PC-3 (cell line): ENCODE measurements at regions of chr11 and their contacts with region 1.

Region 1: DNA sequence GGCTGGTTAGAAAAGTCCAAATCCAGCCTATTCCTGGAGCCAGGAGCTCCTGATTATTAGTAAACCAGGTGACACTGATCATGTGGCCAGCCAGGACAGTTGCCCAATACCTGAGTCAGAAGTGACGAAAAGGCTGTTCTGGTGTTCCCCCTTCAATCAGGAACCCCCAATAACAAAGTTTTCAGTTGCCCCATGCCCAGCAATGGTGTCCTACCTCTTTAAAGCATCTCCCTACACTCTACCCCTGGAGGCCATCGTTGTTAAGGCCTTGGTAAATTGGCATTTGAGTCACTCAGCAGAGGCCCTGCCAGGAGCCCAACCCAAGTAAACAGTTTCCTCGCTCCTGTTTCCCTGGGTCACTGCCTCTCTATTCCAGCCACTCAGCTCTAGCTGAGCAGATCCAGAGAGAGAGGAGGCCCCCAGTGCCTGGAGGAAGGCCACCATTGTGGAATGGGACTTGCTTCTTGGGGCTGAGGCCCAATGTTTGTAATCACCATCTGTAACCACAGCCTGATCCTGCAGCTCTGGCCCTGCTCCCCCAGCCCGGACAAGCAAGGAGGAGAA is 25.0 kb downstream of the ARHGAP1 start:
- DNase-seq: peak; percentile 72
- ATAC-seq: peak; percentile 94
- H3K4me3 ChIP-seq: no peak overlapping the region
- H3K27ac ChIP-seq: peak overlapping the region; percentile 38
- H3K4me1 ChIP-seq: peaks cover 13% of the 10 kb centered on the region
- H3K27me3 ChIP-seq: no peaks in the 10 kb centered on the region
- CTCF ChIP-seq: no peak

Region 2: GRCh38 chr11:46346886-46347636 is 328.3 kb before region 1 on chr11 and contains the start of gene DGKZ:
- CTCF ChIA-PET with region 1: no interaction called
- POLR2A ChIA-PET with region 1: no interaction called
- intact Hi-C with region 1: no loop called
- DNase-seq: peak; percentile 87
- ATAC-seq: peak; percentile 82
- H3K4me3 ChIP-seq: peak within 1 kb of the TSS; percentile 81
- H3K27ac ChIP-seq: no peak within 1 kb of the TSS
- H3K4me1 ChIP-seq: peaks cover 12% of the 10 kb centered on the region
- H3K27me3 ChIP-seq: no peaks in the 10 kb centered on the region
- CTCF ChIP-seq: peak; percentile 38
- total RNA-seq, gene DGKZ: 70.2 and 91.0 TPM in 2 replicates

Region 3: GRCh38 chr11:46659908-46660307 is 15.5 kb before region 1 on chr11:
- CTCF ChIA-PET with region 1: no interaction called
- POLR2A ChIA-PET with region 1: no interaction called
- intact Hi-C with region 1: no loop called
- DNase-seq: no peak
- ATAC-seq: no peak
- H3K4me3 ChIP-seq: no peak overlapping the region
- H3K27ac ChIP-seq: no peak overlapping the region
- H3K4me1 ChIP-seq: no peaks in the 10 kb centered on the region
- H3K27me3 ChIP-seq: no peaks in the 10 kb centered on the region
- CTCF ChIP-seq: no peak

Region 4: DNA sequence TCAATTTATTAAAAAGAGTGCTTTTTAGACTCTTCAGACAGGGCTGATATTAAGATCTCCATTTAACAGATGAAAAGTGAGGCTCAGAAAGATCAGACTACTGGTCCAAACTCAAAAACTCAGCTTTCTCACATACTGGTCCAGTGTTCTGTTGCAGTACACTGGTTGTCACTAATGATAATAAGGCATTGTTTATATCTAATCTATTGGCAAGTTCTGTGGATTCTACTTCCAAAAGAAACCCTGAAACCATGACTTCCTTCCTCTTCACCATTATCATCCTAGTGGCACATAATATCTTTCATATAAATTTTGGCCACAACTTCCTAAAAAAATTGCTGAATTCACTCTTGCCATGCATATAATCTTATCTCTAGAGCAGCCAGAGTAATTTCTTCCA is 80.6 kb after region 1 on chr11:
- CTCF ChIA-PET with region 1: no interaction called
- POLR2A ChIA-PET with region 1: no interaction called
- intact Hi-C with region 1: loop called (anchors 10 kb)
- DNase-seq: no peak
- ATAC-seq: no peak
- H3K4me3 ChIP-seq: no peak overlapping the region
- H3K27ac ChIP-seq: peak overlapping the region; percentile 51
- H3K4me1 ChIP-seq: no peaks in the 10 kb centered on the region
- H3K27me3 ChIP-seq: no peaks in the 10 kb centered on the region
- CTCF ChIP-seq: no peak

Region 5: DNA sequence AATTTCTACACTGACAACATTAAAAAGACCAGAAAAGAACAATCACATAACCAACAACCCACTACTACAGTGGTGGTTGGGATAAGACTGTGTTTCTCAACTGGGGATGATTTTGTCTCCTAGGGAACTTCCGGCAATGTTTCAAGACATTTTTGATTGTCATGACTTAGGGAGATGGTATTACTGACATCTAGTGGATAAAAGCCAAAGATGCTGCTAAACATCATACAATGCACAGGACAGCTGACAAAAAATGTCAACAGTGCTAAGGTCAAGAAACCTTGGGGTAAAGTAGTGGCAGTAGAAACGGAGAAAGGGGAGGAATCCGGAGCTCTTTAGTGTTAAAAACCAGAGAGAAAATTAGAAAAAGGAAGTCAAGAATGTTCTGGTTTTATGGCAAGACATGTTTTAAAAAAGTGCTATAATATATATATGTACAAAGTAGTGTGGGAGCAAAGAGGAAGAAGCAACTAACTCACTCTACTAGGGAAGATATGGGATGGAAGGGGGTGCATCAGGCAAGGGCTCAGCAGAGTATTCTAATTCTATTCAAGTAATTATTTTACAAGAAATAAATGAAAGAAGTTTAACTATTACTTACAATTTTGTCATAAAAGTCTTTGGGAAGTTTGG is 133.5 kb after region 1 on chr11:
- CTCF ChIA-PET with region 1: no interaction called
- POLR2A ChIA-PET with region 1: no interaction called
- intact Hi-C with region 1: loop called (anchors 5 kb)
- DNase-seq: peak; percentile 53
- ATAC-seq: peak; percentile 85
- H3K4me3 ChIP-seq: no peak overlapping the region
- H3K27ac ChIP-seq: no peak overlapping the region
- H3K4me1 ChIP-seq: no peaks in the 10 kb centered on the region
- H3K27me3 ChIP-seq: no peaks in the 10 kb centered on the region
- CTCF ChIP-seq: peak; percentile 57

Region 6: GRCh38 chr11:46906609-46907041 is 231.3 kb after region 1 on chr11:
- CTCF ChIA-PET with region 1: no interaction called
- POLR2A ChIA-PET with region 1: no interaction called
- intact Hi-C with region 1: no loop called
- DNase-seq: no peak
- ATAC-seq: no peak
- H3K4me3 ChIP-seq: no peak overlapping the region
- H3K27ac ChIP-seq: no peak overlapping the region
- H3K4me1 ChIP-seq: no peaks in the 10 kb centered on the region
- H3K27me3 ChIP-seq: no peaks in the 10 kb centered on the region
- CTCF ChIP-seq: no peak